Natural killer cell (primary cell): ENCODE measurements at regions of chr7 and their contacts with region 1.

Region 1: DNA sequence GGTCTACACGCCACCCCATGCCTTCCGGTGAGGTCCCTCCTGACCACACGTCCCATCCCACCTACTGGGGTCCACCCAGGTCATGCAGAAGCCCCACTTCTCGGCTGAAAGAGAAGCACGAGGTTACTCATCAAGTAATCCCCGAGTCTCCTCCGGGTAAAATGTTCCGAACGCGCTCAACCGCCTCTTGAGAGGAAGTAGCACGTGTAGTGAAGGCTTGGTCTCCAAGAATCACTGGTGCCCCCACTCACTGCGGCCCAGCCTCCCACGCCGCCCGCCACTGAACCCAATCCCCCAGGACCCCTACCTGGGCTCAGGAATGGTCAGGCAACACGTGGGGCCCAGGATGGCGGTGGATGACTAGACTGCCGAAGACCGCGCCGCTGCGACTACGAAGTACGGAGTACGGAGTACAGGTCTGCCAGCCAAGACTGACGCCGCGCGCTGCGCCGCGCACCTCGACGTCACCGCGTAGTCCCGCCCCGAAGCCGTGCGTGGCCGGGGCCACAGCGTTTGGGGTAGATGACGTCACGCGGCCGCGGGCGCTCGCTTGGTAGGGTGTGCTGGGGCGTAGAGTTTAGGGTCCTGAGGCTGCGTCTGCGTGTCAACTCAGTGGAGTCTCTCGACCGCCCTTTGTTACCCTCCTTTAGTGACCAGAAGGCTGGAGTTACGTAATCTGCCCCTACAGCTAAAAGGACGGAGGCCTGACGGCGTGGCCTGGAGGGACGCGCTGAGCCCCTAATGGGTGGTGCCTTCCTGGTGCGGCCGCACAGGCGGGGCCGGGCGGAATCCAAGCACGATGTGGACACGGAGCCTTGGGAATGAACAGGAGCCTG is 7.6 kb upstream of the MYO1G start:
- DNase-seq: peak; percentile 96 to 99
- ATAC-seq: peak; percentile 91 to 98 (median 95)
- H3K4me3 ChIP-seq: peak overlapping the region; percentile 61
- H3K4me3 Mint-ChIP-seq: peak overlapping the region; percentile 96
- H3K27ac ChIP-seq: peak overlapping the region; percentile 84
- H3K27ac Mint-ChIP-seq: peak overlapping the region; percentile 99 to 100
- H3K4me1 ChIP-seq: peaks cover 40% of the 10 kb centered on the region
- H3K4me1 Mint-ChIP-seq: peaks cover 37 to 39% of the 10 kb centered on the region in 2 donors
- H3K27me3 ChIP-seq: no peaks in the 10 kb centered on the region
- H3K27me3 Mint-ChIP-seq: no peaks in the 10 kb centered on the region
- CTCF ChIP-seq: no peak

Region 2: DNA sequence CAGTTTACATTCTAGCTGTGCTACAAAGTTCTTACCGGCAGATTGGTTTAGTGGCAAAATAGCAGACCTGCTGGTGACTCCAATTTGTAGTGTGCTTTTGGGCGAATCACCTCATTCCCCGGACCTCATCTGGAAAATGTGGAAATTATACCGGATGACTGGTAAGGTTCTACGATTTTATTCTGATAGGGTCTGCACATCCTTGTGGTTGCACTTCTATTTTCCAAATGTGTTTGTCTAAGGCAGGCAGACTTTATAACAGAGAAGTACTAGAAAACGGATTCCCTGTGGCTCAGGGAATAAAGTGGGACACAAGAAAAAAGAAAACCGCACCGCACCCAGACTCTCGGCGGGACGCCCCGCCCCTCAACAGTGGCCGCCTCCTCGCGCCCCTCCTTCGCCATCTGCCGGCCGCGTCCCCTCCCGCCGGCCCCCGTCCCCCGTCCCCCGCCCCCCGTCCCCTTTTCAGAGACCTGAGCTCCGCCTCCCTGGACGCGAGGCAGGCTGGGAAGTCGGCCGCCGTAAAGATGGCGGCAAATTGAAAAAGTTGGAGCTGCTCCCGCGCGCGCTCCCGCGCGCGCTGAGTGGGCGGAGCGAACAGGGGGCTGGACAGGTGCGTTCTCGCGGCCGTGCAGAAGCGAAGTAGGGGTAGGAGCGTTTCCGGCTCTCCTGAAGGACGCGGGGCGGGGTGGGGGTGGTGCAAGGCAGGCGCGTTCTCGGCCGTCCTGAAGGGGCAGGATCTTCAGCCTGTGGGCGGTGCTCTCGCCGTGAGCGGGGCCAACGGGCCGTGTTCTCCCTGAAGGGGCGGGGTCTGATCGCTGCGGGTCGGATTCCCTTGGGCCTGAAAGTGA is 13.0 kb after region 1 on chr7:
- intact Hi-C with region 1: loop called (anchors 1 kb)
- DNase-seq: peak; percentile 90 to 99
- ATAC-seq: peak; percentile 88 to 96 (median 89)
- H3K4me3 ChIP-seq: peak overlapping the region; percentile 54
- H3K4me3 Mint-ChIP-seq: peak overlapping the region; percentile 98
- H3K27ac ChIP-seq: peak overlapping the region; percentile 63
- H3K27ac Mint-ChIP-seq: peak overlapping the region; percentile 91 to 95
- H3K4me1 ChIP-seq: peaks cover 16% of the 10 kb centered on the region
- H3K4me1 Mint-ChIP-seq: peaks cover 27 to 38% of the 10 kb centered on the region in 2 donors
- H3K27me3 ChIP-seq: no peaks in the 10 kb centered on the region
- H3K27me3 Mint-ChIP-seq: no peaks in the 10 kb centered on the region
- CTCF ChIP-seq: no peak

Region 3: DNA sequence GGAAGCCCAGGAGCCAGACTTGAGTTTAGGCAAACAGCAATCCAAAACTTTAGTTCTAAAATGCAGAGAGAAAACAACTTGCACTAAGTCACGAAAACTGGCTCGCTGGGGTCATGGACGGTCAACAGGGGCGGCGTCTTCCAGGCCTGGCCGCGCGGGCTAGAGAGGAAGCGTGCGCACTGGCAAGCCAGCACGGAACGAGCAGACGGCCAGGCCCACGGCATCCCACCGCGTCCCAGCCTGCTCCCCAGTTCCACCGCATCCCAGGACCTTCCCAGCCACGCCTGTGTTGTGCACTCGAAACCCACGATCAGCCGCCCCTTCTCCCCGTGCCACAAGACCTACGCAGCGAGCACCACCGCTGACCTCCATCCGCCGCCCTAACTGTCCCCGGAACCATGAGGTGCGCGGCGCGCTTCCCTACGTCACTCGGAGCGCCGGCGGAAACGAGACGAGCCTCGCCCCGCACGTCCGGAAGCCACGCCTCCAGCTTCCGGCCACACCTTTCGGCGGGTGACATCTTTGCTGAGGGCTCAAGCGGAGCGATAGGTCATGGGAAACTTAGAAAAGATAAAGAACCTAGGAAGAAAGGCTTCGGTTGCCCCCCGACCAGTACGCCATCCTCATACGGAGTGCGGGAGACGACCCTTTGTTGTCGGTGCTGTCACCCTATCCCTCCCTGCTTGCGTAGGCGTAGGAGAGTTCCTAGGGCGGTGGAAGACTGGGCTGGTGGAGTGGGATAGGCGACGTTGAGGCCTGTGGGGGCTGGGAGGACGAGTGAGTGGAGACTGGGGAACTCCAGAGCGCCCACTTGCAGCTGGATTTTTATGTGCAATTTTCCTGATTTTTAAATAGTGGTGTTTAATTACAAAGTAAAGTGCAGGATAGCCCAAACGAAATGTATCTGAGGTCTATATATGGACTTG is 125.1 kb after region 1 on chr7 and contains the start of gene TBRG4:
- intact Hi-C with region 1: loop called (anchors 2 kb)
- DNase-seq: peak; percentile 94 to 98
- ATAC-seq: peak; percentile 93 to 97 (median 96)
- H3K4me3 ChIP-seq: peak within 1 kb of the TSS; percentile 66
- H3K4me3 Mint-ChIP-seq: peak within 1 kb of the TSS; percentile 100
- H3K27ac ChIP-seq: peak within 1 kb of the TSS; percentile 90
- H3K27ac Mint-ChIP-seq: peak within 1 kb of the TSS; percentile 100
- H3K4me1 ChIP-seq: peaks cover 33% of the 10 kb centered on the region
- H3K4me1 Mint-ChIP-seq: peaks cover 23 to 37% of the 10 kb centered on the region in 2 donors
- H3K27me3 ChIP-seq: no peaks in the 10 kb centered on the region
- H3K27me3 Mint-ChIP-seq: peaks cover 2 to 10% of the 10 kb centered on the region in 2 donors
- CTCF ChIP-seq: no peak
- total RNA-seq, gene TBRG4: 48.6 to 56.7 (median 55.9) TPM